ENCODE measurements at regions of chr10 and their contacts with region 1.

Region 1: DNA sequence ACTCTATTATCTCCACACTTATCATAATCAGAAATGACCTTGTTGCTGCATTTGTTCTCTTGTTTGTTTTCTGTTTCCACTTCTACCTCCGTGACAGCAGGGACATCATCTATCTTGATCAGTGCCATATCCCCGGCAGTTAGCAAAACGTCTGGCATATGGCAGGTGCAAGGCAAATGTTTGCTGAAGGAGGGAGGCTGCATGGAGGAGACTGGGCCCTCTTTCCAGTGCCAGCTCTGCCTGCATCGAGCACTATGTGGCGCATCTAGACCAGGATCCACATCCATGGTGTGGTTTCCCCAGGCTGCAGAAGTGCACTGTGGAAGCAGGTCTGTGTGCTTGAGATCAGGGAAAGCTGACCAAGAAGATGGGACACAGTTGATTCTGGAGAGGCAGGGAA is 181.2 kb downstream of the KCNMA1 start:
- DNase-seq: no peak
- H3K4me3 ChIP-seq: no peak overlapping the region
- H3K27ac ChIP-seq: no peak overlapping the region
- H3K4me1 ChIP-seq: peaks cover 0 to 39% (median 4%) of the 10 kb centered on the region in 4 donors
- H3K27me3 ChIP-seq: no peaks in the 10 kb centered on the region
- CTCF ChIP-seq: no peak

Region 2: DNA sequence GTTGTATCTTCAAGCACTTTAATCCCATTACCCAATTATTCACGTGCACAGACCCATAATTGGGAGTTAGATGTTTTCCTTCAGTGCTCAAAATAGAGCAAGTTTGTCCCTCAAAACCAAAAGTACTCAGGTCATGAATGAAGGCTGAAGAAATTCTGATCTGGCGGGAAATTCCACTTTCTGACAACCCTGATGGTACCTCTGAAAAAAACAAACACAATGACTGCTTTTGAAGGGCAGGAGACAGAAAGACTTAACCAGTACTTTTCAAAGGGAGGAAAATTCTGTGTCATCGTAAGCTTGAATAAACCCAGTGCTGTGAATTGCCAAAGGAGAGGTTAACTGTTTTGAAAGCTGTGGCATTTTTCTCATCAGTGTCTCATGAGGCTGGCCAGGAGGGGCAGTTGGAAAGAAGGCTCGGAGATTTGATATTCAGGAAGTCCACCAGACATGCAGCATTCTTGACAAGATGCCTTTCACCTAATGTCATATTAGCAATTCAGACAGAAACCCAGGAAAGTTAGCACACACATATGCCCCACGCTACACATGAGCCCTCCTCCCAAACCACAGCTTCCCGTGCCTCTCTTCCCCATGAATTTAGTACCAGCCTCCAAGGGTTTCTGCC is 165.8 kb before region 1 on chr10:
- intact Hi-C with region 1: no loop called
- DNase-seq: no peak
- H3K4me3 ChIP-seq: no peak overlapping the region
- H3K27ac ChIP-seq: peak overlapping the region; percentile 26 to 36
- H3K4me1 ChIP-seq: peaks cover 0 to 88% (median 43%) of the 10 kb centered on the region in 4 donors
- H3K27me3 ChIP-seq: no peaks in the 10 kb centered on the region
- CTCF ChIP-seq: no peak

Region 3: DNA sequence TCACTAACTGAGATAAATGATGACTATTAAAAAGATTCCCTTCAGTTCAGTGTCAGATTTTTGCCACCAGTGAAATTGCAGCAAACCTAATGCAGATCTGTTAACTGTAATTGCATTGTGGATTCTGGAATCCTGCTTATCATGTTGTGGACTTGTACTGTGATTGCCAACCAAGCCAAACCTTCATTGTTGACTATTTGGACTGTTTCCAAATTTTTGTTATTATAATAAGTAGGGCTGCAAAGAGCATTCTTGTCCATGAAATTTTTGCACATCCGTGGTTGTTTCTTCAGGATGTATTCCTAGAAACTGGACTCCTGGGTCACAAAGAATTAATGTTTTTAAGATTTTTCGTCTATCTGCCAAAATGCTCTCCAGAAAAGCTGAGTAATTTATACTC is 1330.7 kb after region 1 on chr10:
- intact Hi-C with region 1: loop called (anchors 5 kb)
- DNase-seq: no peak
- H3K4me3 ChIP-seq: no peak overlapping the region
- H3K27ac ChIP-seq: peak overlapping the region in 1 of 2 donors; percentile 39
- H3K4me1 ChIP-seq: peaks cover 0 to 37% (median 2%) of the 10 kb centered on the region in 4 donors
- H3K27me3 ChIP-seq: no peaks in the 10 kb centered on the region
- CTCF ChIP-seq: no peak

Region 4: DNA sequence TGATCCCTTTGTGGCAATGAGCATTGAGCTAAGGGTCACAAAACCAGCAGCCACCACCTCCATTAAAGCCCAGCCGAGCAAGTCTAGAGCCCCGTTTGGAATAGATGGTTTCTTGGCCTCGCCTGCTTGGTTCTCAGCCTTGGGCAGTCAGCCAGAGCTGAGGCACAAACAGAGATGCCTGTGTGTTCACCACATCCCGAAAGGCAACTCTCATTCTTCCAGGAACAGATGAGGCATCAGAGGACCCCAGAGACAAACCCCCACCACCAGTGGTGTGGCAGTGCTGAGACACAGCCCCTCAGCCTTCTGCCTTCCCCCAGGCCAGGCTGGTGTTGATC is 1409.1 kb after region 1 on chr10:
- intact Hi-C with region 1: no loop called
- DNase-seq: no peak
- H3K4me3 ChIP-seq: no peak overlapping the region
- H3K27ac ChIP-seq: no peak overlapping the region
- H3K4me1 ChIP-seq: peaks cover 0 to 23% (median 19%) of the 10 kb centered on the region in 4 donors
- H3K27me3 ChIP-seq: no peaks in the 10 kb centered on the region
- CTCF ChIP-seq: no peak

Measured in tibial artery (tissue), 4 donors.